ENCODE measurements at regions of chr3 and their contacts with region 1.

Region 1: DNA sequence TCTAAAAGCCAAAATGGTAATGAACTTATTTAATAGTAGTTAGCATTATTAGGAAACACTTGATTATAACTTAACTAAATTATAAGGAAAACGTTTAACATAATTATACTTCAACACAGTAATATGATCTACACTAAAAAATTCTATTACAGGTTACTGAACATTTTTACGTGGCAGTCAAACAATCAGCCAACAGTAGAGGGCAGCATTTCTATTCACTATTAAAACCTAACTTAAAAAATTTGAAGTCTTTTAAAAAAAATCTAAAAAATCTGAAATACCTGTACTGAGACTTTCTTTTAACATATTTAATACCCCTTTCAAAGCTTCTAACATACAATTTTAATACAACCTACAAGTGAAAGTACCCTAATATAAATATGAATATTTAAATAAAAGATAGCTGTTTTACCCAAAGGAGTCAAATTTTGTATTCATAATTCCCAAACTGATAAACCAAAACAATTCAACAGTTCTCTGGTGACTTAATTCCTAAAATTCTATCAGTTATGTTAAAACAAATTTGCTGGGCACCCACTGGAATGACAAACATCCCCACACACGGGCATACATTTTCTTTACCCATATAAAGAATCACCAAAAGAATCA is 41.5 kb downstream of the DLG1 start:
- DNase-seq: peak in 23 of 35 experiments; percentile 3 to 74 (median 18)
- ATAC-seq: no peak
- H3K4me3 ChIP-seq: no peak overlapping the region
- H3K4me3 Mint-ChIP-seq: no peak overlapping the region
- H3K27ac ChIP-seq: no peak overlapping the region
- H3K27ac Mint-ChIP-seq: peak overlapping the region in 1 of 2 donors; percentile 16
- H3K4me1 ChIP-seq: peaks cover 6 to 14% of the 10 kb centered on the region in 2 experiments
- H3K4me1 Mint-ChIP-seq: peaks cover 71 to 76% (median 74%) of the 10 kb centered on the region in 3 donors
- H3K27me3 ChIP-seq: no peaks in the 10 kb centered on the region
- H3K27me3 Mint-ChIP-seq: no peaks in the 10 kb centered on the region

Region 2: GRCh38 chr3:197062446-197062845 is 194.5 kb before region 1 on chr3:
- CTCF ChIA-PET with region 1: no interaction called
- POLR2A ChIA-PET with region 1: no interaction called
- DNase-seq: no peak
- ATAC-seq: no peak
- H3K4me3 ChIP-seq: no peak overlapping the region
- H3K4me3 Mint-ChIP-seq: no peak overlapping the region
- H3K27ac ChIP-seq: no peak overlapping the region
- H3K27ac Mint-ChIP-seq: no peak overlapping the region
- H3K4me1 ChIP-seq: no peaks in the 10 kb centered on the region
- H3K4me1 Mint-ChIP-seq: no peaks in the 10 kb centered on the region
- H3K27me3 ChIP-seq: no peaks in the 10 kb centered on the region
- H3K27me3 Mint-ChIP-seq: no peaks in the 10 kb centered on the region

Region 3: DNA sequence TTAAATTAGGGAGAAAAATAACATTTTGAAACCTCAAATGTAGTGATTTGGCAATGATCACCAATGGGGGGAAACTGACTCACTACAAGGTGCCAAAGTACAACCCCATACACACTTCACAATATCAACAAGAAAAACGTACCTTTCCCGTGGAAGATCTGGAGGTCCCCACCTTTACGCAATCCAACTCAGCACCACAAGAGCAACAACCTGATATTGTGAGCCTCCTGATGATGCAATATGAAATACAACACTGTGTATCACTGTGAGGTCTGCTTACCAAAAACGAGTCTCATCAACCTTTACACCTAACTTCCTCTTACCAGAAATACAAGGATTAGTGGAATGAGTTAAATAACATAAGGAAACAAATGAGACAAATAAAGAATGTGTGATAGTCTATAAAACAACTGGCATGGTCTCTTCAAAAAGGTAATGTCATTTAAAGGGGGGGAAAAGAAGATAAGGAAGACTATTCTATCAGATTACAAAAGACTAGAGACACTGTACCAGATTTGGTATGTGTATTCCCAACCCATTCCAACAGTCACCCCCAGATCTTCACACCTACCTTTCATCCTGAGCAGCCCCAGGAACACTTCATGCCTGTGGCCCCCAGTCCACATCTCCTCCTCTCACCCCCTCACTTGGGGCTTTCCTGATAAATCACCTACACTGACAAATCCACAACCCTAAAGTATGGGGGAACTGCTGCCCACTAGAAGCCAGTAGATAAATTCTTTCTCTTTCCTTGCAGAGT is 13.8 kb after region 1 on chr3:
- CTCF ChIA-PET with region 1: interaction called, 3 to 19 read pairs
- POLR2A ChIA-PET with region 1: interaction called in 1 of 2 experiments, 6 read pairs
- DNase-seq: no peak
- ATAC-seq: no peak
- H3K4me3 ChIP-seq: no peak overlapping the region
- H3K4me3 Mint-ChIP-seq: no peak overlapping the region
- H3K27ac ChIP-seq: no peak overlapping the region
- H3K27ac Mint-ChIP-seq: no peak overlapping the region
- H3K4me1 ChIP-seq: no peaks in the 10 kb centered on the region
- H3K4me1 Mint-ChIP-seq: peaks cover 65 to 71% (median 67%) of the 10 kb centered on the region in 3 donors
- H3K27me3 ChIP-seq: no peaks in the 10 kb centered on the region
- H3K27me3 Mint-ChIP-seq: no peaks in the 10 kb centered on the region

Region 4: DNA sequence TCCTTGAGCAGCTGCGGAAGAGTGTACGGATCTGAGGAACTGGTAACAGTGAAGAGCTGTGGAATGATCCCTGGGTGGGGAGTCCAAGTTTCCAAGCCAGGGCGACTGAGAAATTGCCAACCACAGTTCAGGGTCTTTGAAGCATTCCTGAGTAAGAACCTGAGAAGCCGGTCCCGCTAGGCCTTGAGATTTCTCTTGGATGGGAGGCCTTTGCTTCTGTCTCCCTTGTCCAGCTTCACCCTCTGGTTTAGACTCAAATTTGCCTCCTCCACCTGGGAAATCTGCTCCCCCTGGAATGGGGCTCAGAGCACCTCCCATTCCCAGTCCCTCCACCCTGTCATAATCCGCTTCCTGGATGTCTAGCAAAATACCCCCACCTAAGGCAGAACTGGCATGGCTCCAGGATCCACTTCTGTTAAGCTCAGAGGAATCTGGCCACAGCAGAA is 169.2 kb after region 1 on chr3:
- CTCF ChIA-PET with region 1: no interaction called
- POLR2A ChIA-PET with region 1: interaction called in 1 of 2 experiments, 10 read pairs
- DNase-seq: no peak
- ATAC-seq: no peak
- H3K4me3 ChIP-seq: no peak overlapping the region
- H3K4me3 Mint-ChIP-seq: no peak overlapping the region
- H3K27ac ChIP-seq: no peak overlapping the region
- H3K27ac Mint-ChIP-seq: no peak overlapping the region
- H3K4me1 ChIP-seq: peaks cover 8 to 21% of the 10 kb centered on the region in 2 experiments
- H3K4me1 Mint-ChIP-seq: peaks cover 21 to 25% (median 23%) of the 10 kb centered on the region in 3 donors
- H3K27me3 ChIP-seq: peaks cover 0 to 30% of the 10 kb centered on the region in 2 experiments
- H3K27me3 Mint-ChIP-seq: peaks cover 0 to 19% of the 10 kb centered on the region in 2 donors

Region 5: DNA sequence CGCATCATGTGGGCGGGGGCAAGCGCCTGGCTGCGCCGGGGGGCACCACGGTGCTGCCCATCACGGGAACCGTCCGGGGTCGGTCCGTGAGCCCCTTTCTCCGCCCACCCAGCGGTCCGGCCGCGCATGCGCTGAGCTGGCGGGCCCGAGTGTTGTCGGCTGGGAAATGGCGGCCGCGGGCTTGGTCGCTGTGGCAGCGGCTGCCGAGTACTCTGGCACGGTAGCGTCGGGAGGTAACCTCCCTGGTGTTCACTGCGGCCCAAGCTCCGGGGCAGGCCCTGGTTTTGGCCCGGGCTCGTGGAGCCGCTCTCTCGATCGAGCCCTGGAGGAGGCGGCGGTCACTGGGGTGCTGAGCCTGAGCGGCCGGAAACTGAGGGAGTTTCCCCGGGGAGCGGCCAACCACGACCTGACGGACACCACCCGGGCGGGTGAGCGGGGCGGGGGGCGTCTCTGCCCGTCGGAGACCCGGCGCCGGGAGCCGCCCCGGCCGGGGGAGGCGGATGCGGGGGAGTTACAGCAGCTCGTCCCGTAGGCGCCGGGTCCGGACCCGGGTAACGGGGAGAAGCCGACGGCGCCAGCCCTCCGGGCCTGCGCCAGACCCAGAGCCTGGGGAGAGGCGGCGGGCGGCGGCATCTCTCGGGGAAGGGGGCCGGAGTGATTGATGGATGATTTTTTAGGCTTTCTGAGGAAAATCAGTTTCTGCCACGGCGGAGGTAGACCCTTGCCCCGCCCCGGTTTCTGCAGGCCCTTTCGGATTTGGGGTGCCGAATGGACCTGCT is 534.4 kb after region 1 on chr3 and contains the start of gene LRCH3:
- CTCF ChIA-PET with region 1: no interaction called
- POLR2A ChIA-PET with region 1: no interaction called
- DNase-seq: peak; percentile 55 to 88 (median 75)
- ATAC-seq: peak; percentile 81 to 82 (median 81)
- H3K4me3 ChIP-seq: peak within 1 kb of the TSS; percentile 96 to 97
- H3K4me3 Mint-ChIP-seq: peak within 1 kb of the TSS; percentile 94 to 96 (median 95)
- H3K27ac ChIP-seq: peak within 1 kb of the TSS; percentile 98
- H3K27ac Mint-ChIP-seq: peak within 1 kb of the TSS; percentile 95 to 96
- H3K4me1 ChIP-seq: peaks cover 10 to 14% of the 10 kb centered on the region in 2 experiments
- H3K4me1 Mint-ChIP-seq: peaks cover 46 to 48% (median 48%) of the 10 kb centered on the region in 3 donors
- H3K27me3 ChIP-seq: no peaks in the 10 kb centered on the region
- H3K27me3 Mint-ChIP-seq: no peaks in the 10 kb centered on the region
- total RNA-seq, gene LRCH3: 51.4 to 75.1 (median 62.2) TPM

Measured in T-cell (primary cell).